ENCODE measurements at regions of chr20 and their contacts with region 1.

Region 1: DNA sequence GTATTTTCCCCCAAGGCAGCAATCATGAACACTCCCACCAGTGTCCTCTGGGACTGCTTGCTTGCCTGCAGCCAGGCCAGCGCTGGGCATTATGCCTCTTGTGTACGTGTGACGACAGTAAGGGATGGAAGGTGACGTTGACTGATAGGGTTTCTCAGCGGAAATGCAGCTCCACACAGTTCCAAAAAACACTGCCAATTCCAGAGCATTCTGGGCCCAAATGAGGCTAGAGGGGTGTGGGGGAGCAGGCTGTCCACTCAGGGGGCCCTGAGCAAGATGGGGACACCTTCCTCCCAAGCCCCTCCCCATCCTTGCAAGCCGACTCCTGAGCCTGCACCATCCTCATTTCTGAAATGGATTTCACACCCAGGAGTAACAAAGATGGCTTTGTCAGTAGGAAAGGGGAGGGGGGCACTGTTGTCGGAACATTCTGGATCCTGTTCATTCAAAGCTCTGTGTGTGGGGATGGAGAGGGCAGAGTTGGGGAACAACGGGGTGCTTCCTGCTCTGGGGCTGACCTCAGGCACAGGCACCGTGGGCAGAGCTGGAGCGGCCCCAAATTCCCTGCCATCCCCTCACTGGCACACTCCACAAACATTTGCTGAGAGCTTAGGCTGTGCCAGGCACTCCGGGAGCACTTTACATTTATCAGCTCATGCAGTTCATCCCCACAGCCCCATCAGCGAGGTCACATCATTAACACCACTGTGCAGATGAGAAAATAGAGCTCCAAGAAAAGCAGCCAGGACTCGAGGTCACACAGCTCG is 20.0 kb downstream of the PREX1 start:
- DNase-seq: peak; percentile 44 to 71
- ATAC-seq: peak in 7 of 8 donors; percentile 64 to 91 (median 87)
- H3K4me3 ChIP-seq: peak overlapping the region in 2 of 10 donors; percentile 9 to 17
- H3K27ac ChIP-seq: peak overlapping the region in 6 of 10 donors; percentile 37 to 63 (median 44)
- H3K4me1 ChIP-seq: peaks cover 6 to 77% (median 22%) of the 10 kb centered on the region in 9 donors
- H3K27me3 ChIP-seq: no peaks in the 10 kb centered on the region
- CTCF ChIP-seq: no peak

Region 2: GRCh38 chr20:48682529-48683251 is 125.2 kb before region 1 on chr20:
- intact Hi-C with region 1: loop called in 1 of 10 experiments (anchors 5 kb)
- DNase-seq: peak; percentile 84 to 91
- ATAC-seq: peak; percentile 82 to 93 (median 88)
- H3K4me3 ChIP-seq: peak overlapping the region in 5 of 10 donors; percentile 16 to 25 (median 23)
- H3K27ac ChIP-seq: peak overlapping the region; percentile 1 to 81 (median 69)
- H3K4me1 ChIP-seq: peaks cover 24 to 65% (median 59%) of the 10 kb centered on the region in 9 donors
- H3K27me3 ChIP-seq: no peaks in the 10 kb centered on the region
- CTCF ChIP-seq: no peak

Region 3: DNA sequence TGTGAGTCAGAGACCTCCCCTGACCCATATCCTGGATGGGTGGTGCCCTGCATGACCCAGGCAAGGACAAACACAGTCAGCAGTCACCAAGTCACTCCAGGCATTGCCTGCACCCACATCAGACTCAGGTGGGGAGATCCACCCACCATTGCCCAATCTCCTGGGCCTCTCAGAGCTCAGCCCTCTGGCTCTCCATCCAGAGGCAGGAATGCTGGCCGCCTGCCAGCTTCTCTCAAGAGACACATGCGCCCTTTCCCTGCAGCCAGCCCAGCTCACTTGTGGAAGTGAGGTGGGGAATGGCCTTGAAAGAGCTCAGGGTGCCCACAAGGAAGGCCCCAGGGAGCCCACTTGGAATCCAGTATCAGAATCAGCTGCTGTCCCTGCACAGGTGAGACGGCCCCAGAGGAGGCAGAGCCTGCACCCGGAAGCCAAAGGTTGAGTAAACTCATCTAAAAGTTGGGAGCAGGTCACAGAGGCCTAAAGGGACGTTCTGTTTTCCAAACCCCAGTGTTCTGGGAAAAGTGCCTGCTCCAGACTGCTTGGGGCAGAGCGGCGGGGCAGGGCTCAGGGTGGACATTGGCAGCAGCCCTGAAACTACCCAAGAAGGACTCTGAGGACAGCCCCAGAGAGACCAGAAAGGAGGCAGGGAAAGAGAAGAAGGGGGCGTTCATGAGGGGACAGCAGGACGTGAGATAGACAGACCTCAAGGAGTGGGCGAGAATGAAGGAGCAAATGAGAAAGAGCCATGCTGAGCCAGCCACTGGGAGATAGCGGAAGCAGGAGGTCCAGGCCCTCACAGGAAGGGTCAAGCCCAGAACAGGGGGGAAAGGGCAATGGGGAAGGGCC is 109.7 kb before region 1 on chr20:
- intact Hi-C with region 1: loop called in 1 of 10 experiments (anchors 5 kb)
- DNase-seq: peak; percentile 79 to 84
- ATAC-seq: peak; percentile 84 to 97 (median 93)
- H3K4me3 ChIP-seq: no peak overlapping the region
- H3K27ac ChIP-seq: peak overlapping the region in 8 of 10 donors; percentile 32 to 69 (median 65)
- H3K4me1 ChIP-seq: peaks cover 2 to 28% (median 15%) of the 10 kb centered on the region in 9 donors
- H3K27me3 ChIP-seq: no peaks in the 10 kb centered on the region
- CTCF ChIP-seq: no peak

Region 4: GRCh38 chr20:49046087-49046900 is 238.4 kb after region 1 on chr20 and contains the start of gene CSE1L:
- intact Hi-C with region 1: no loop called
- DNase-seq: peak; percentile 94 to 95
- ATAC-seq: peak; percentile 96 to 99 (median 98)
- H3K4me3 ChIP-seq: peak within 1 kb of the TSS; percentile 64 to 98 (median 92)
- H3K27ac ChIP-seq: peak within 1 kb of the TSS; percentile 42 to 94 (median 90)
- H3K4me1 ChIP-seq: peaks cover 0 to 32% (median 22%) of the 10 kb centered on the region in 9 donors
- H3K27me3 ChIP-seq: no peaks in the 10 kb centered on the region
- CTCF ChIP-seq: peak in 1 of 9 donors; percentile 15
- total RNA-seq, gene CSE1L: 27.8 to 47.6 (median 39.9) TPM

Region 5: DNA sequence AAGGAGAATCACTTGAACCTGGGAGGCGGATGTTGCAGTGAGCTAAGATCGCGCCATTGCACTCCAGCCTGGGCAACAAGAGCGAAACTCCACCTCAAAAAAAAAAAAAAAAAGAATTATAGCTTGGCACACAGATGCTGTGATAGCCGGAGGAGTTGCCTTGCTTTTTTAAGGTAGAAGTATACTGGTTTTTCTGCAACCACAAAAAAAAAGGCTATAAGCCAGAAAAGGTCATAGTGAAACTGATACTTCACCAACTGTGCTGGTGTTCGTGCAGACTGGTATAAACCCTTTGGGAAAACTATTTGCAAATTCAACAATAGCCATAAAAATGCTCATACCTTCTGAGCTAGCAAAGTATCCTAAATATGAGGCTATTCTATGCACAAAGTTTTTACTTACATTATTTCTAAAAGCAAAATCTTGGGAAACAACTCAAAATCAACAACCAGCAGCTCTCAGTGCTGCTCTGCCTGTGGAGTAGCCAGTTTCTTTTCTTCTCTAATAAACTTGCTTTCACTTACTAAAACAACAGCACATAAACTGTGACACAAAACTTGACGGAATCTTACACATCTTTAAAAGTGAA is 861.9 kb after region 1 on chr20:
- intact Hi-C with region 1: loop called in 1 of 10 experiments (anchors 5 kb)
- DNase-seq: no peak
- ATAC-seq: no peak
- H3K4me3 ChIP-seq: peak overlapping the region in 1 of 10 donors; percentile 15
- H3K27ac ChIP-seq: peak overlapping the region in 2 of 10 donors; percentile 28 to 71
- H3K4me1 ChIP-seq: peaks cover 2 to 85% (median 61%) of the 10 kb centered on the region in 9 donors
- H3K27me3 ChIP-seq: no peaks in the 10 kb centered on the region
- CTCF ChIP-seq: no peak